Naive thymus-derived CD4-positive, alpha-beta T cell (primary cell): ENCODE measurements at regions of chr2 and their contacts with region 1.

Region 1: GRCh38 chr2:112187805-112188596 is 49.8 kb downstream of the FBLN7 start:
- DNase-seq: peak in 8 of 9 donors; percentile 69 to 95 (median 88)
- ATAC-seq: peak; percentile 90
- H3K4me3 ChIP-seq: peak overlapping the region; percentile 31
- H3K4me3 Mint-ChIP-seq: peak overlapping the region; percentile 58 to 88 (median 74)
- H3K27ac ChIP-seq: peak overlapping the region; percentile 85
- H3K27ac Mint-ChIP-seq: peak overlapping the region; percentile 92 to 100 (median 99)
- H3K4me1 ChIP-seq: peaks cover 21 to 80% of the 10 kb centered on the region in 2 donors
- H3K4me1 Mint-ChIP-seq: peaks cover 59 to 96% (median 94%) of the 10 kb centered on the region in 7 donors
- H3K27me3 ChIP-seq: no peaks in the 10 kb centered on the region
- H3K27me3 Mint-ChIP-seq: no peaks in the 10 kb centered on the region

Region 2: DNA sequence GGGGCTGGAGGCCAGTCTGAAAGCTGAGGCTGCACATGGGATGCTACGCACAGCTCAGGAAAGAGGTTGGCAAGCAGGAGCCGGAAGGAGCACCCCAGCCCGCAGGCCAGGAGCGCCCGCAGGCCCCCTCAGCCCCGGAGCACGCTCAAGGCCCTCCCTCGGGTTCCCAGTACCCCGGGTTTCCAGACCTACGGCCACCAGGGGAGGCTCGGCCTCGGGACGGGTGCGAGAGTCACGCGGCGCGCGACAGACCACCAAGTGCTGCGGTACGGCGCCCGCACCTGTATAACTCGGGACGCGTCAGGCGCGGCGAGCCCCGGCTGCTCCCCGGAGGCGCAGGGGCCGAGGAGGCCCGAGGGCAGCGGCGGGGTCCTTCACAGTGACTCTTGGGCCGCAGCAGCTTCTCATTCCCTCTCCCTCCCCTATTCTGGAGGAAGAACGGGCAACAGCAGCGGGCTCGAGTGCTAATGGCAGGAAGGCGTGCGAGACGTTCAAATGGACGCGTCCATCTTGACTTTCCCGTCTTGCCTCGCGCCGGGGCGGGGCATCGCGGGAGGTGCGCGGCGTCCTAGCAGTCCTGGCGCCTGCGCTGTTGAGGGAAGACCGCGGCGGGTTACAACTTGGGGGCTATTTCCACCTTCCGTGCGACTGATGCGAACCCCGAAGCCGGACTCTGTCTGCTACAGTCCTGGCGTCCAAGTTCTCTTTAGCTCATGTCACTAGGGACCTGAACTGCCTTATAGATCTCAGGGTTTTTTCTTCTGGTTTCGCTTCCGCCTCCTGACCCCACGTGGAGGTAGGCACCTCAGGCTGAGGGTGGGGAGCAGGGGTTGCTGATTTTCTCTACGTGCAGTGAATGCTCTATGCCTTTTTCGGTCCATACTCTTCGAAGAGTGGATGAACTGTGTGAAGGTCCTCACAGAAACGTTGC is 304.1 kb before region 1 on chr2 and contains the start of gene ANAPC1:
- CTCF ChIA-PET with region 1: no interaction called
- POLR2A ChIA-PET with region 1: no interaction called
- intact Hi-C with region 1: loop called in 1 of 2 experiments (anchors 5 kb)
- DNase-seq: peak; percentile 75 to 87 (median 84)
- ATAC-seq: peak; percentile 98
- H3K4me3 ChIP-seq: peak within 1 kb of the TSS; percentile 69
- H3K4me3 Mint-ChIP-seq: peak within 1 kb of the TSS; percentile 92 to 99 (median 96)
- H3K27ac ChIP-seq: peak within 1 kb of the TSS; percentile 85
- H3K27ac Mint-ChIP-seq: peak within 1 kb of the TSS; percentile 92 to 98 (median 96)
- H3K4me1 ChIP-seq: peaks cover 0 to 10% of the 10 kb centered on the region in 2 donors
- H3K4me1 Mint-ChIP-seq: peaks cover 2 to 26% (median 13%) of the 10 kb centered on the region in 7 donors
- H3K27me3 ChIP-seq: no peaks in the 10 kb centered on the region
- H3K27me3 Mint-ChIP-seq: no peaks in the 10 kb centered on the region
- total RNA-seq, gene ANAPC1: 51.8 to 77.2 (median 62.7) TPM

Region 3: DNA sequence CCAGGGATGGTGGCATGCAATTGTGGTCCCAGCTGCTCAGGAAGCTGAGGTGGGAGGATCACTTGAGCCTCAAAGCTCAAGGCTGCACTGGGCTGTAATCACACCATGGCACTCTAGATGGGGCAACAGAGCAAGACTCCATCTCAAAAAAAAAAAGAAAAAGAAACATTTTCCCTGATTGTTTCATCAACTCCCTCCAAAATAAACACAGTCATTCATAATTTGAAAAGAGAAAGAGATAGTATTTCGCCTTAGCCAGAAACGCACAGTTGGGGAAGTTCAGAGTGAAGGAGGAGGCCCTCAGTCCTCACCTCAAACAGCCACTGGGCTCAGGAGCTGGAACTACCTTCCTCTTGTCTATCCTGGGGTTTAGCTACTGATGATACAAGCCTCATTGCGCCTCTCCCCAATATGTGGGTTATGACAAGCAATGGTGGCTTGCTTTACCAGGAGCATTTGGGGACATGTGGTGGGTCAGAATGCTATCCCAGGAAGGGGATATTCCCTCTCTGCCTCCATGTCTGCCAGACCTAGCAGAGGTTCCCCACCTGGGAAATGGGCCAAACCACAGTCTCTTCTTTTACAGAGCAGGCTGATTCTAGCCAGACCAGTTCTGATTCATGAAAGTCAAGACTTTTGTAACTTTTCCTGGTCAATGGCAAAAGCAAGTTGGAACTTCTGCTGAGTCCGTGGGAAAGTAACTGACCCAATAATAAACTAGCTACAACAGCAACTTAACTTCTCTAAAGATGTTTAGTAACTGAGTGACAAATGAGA is 155.1 kb before region 1 on chr2:
- CTCF ChIA-PET with region 1: no interaction called
- POLR2A ChIA-PET with region 1: no interaction called
- intact Hi-C with region 1: no loop called
- DNase-seq: no peak
- ATAC-seq: peak; percentile 76
- H3K4me3 ChIP-seq: no peak overlapping the region
- H3K4me3 Mint-ChIP-seq: no peak overlapping the region
- H3K27ac ChIP-seq: no peak overlapping the region
- H3K27ac Mint-ChIP-seq: no peak overlapping the region
- H3K4me1 ChIP-seq: no peaks in the 10 kb centered on the region
- H3K4me1 Mint-ChIP-seq: peaks cover 0 to 10% (median 5%) of the 10 kb centered on the region in 7 donors
- H3K27me3 ChIP-seq: no peaks in the 10 kb centered on the region
- H3K27me3 Mint-ChIP-seq: peaks cover 7 to 17% (median 9%) of the 10 kb centered on the region in 5 donors

Region 4: DNA sequence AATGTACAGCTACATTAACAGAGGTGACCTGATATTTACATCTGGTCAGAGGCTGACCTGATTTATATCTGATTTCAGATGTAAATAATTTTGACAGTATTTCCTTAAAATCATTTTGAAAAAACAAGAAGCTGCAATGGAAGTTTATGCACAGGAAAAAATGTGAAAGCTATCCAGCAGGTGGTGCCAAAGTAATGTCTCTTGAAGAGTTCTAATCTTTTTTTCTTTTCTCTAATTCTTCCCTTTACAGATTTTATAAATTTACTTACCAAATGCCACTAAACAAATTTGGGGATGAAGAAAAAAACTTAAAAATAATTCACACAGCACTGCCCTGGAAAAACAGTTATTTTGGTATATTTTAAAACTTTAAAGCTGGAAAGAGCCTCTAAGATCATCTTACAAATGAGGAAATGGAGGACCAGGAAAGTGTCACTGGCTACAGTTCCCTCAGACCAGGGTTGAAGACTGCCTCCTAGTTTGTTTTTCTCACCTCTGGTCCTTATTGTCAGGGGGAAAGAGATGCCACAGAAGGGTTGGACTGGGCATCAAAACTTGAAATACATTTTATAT is 66.2 kb before region 1 on chr2:
- CTCF ChIA-PET with region 1: no interaction called
- POLR2A ChIA-PET with region 1: interaction called, 4 read pairs
- intact Hi-C with region 1: loop called (anchors 2 to 5 kb)
- DNase-seq: peak in 7 of 9 donors; percentile 33 to 68 (median 56)
- ATAC-seq: no peak
- H3K4me3 ChIP-seq: no peak overlapping the region
- H3K4me3 Mint-ChIP-seq: no peak overlapping the region
- H3K27ac ChIP-seq: no peak overlapping the region
- H3K27ac Mint-ChIP-seq: peak overlapping the region in 3 of 9 donors; percentile 40 to 62 (median 47)
- H3K4me1 ChIP-seq: no peaks in the 10 kb centered on the region
- H3K4me1 Mint-ChIP-seq: peaks cover 0 to 8% (median 0%) of the 10 kb centered on the region in 7 donors
- H3K27me3 ChIP-seq: no peaks in the 10 kb centered on the region
- H3K27me3 Mint-ChIP-seq: no peaks in the 10 kb centered on the region

Region 5: GRCh38 chr2:112156152-112156986 is 31.6 kb before region 1 on chr2:
- CTCF ChIA-PET with region 1: no interaction called
- POLR2A ChIA-PET with region 1: interaction called, 26 read pairs
- intact Hi-C with region 1: loop called (anchors 1 to 2 kb)
- DNase-seq: peak in 6 of 9 donors; percentile 10 to 61 (median 22)
- ATAC-seq: peak; percentile 22
- H3K4me3 ChIP-seq: peak overlapping the region; percentile 25
- H3K4me3 Mint-ChIP-seq: peak overlapping the region; percentile 58 to 89 (median 84)
- H3K27ac ChIP-seq: peak overlapping the region; percentile 56
- H3K27ac Mint-ChIP-seq: peak overlapping the region; percentile 85 to 96 (median 90)
- H3K4me1 ChIP-seq: peaks cover 18 to 25% of the 10 kb centered on the region in 2 donors
- H3K4me1 Mint-ChIP-seq: peaks cover 15 to 47% (median 38%) of the 10 kb centered on the region in 7 donors
- H3K27me3 ChIP-seq: no peaks in the 10 kb centered on the region
- H3K27me3 Mint-ChIP-seq: no peaks in the 10 kb centered on the region

Region 6: DNA sequence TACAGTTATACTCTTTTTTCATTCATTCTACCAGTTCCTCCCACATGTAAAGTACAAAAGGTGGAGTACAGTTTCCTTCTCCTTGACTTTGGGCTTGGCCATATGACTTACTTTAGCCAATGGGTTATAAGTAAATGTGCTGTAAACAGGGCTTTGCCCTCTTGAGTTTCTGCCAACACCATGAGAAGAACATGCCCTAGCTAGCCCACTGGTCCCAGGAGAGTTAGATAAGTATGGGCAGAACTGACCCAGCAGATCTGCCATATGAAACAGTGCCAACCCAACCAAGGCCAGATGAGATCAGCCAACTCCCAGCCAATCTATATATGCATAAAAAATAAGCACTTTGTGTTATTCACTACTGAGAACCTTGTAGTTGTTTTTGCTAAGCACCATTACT is 41.3 kb after region 1 on chr2:
- CTCF ChIA-PET with region 1: interaction called, 3 read pairs
- POLR2A ChIA-PET with region 1: no interaction called
- intact Hi-C with region 1: loop called in 1 of 2 experiments (anchors 5 kb)
- DNase-seq: no peak
- ATAC-seq: no peak
- H3K4me3 ChIP-seq: no peak overlapping the region
- H3K4me3 Mint-ChIP-seq: no peak overlapping the region
- H3K27ac ChIP-seq: no peak overlapping the region
- H3K27ac Mint-ChIP-seq: peak overlapping the region in 4 of 9 donors; percentile 26 to 72 (median 38)
- H3K4me1 ChIP-seq: no peaks in the 10 kb centered on the region
- H3K4me1 Mint-ChIP-seq: peaks cover 0 to 14% (median 4%) of the 10 kb centered on the region in 7 donors
- H3K27me3 ChIP-seq: no peaks in the 10 kb centered on the region
- H3K27me3 Mint-ChIP-seq: no peaks in the 10 kb centered on the region

Region 7: DNA sequence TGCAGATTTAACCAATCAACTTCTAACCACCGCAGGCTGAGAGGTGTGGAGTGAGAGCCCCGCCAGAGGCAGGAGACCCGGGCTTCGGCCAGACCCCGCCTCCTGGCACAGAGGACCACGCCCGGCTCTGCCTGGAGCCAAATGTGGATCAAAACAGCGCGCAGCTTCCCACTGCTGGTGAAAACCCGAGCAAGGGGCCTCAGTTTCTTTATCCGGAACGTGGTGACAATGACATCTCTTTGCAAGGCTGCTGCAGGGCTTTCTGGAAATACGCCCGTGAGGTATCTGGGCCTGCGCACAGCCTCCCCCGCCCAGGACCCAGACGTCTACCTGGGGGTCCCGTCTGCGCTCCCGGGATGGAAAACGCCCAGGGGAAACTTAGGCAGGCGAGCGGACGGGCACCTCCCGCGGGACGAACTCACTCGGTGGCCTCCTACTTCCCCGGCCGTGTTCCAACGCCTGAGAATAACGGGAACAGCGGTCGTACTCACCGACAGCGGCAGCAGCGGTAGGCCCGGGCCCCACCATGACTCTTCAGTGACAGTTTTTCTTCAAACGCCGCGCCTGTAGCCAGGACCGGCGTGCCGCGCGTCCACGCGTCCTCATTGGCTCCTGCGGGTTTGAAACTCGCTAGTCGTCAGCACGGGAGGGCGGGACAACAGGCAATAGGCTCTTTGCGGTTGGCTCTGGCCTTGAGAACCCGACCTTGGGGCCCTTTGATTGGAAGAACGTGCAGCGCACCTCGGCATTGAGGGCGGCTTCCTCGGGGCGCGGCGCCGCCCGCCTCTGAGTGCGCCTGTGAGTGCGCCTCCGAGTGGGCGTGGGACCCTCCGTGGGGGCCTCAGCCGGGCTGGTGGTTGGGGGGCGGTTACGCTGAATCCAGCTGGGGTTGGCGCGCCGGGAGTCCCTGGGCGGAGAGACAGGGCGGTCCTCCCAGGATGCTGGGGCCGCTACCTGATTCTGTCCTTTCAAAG is 576.4 kb after region 1 on chr2 and contains the start of gene CKAP2L:
- CTCF ChIA-PET with region 1: no interaction called
- POLR2A ChIA-PET with region 1: no interaction called
- intact Hi-C with region 1: loop called in 1 of 2 experiments (anchors 10 kb)
- DNase-seq: peak; percentile 85 to 97 (median 94)
- ATAC-seq: peak; percentile 99
- H3K4me3 ChIP-seq: peak within 1 kb of the TSS; percentile 82
- H3K4me3 Mint-ChIP-seq: peak within 1 kb of the TSS; percentile 90 to 97 (median 92)
- H3K27ac ChIP-seq: peak within 1 kb of the TSS; percentile 65
- H3K27ac Mint-ChIP-seq: peak within 1 kb of the TSS; percentile 29 to 95 (median 71)
- H3K4me1 ChIP-seq: peaks cover 12 to 16% of the 10 kb centered on the region in 2 donors
- H3K4me1 Mint-ChIP-seq: peaks cover 15 to 61% (median 30%) of the 10 kb centered on the region in 7 donors
- H3K27me3 ChIP-seq: no peaks in the 10 kb centered on the region
- H3K27me3 Mint-ChIP-seq: no peaks in the 10 kb centered on the region
- total RNA-seq, gene CKAP2L: 0.69 to 36.2 (median 2.4) TPM in 3 of 5 experiments, not detected in the others